ENCODE measurements at regions of chr7 and their contacts with region 1.

Region 1: GRCh38 chr7:115748131-115748738 is 282.3 kb downstream of the TFEC start:
- DNase-seq: peak; percentile 20
- H3K4me3 Mint-ChIP-seq: no peak overlapping the region
- H3K27ac Mint-ChIP-seq: no peak overlapping the region
- H3K4me1 Mint-ChIP-seq: no peaks in the 10 kb centered on the region
- H3K27me3 Mint-ChIP-seq: no peaks in the 10 kb centered on the region
- CTCF ChIP-seq: peak; percentile 41

Region 2: GRCh38 chr7:115230882-115231571 is 517.2 kb before region 1 on chr7:
- CTCF ChIA-PET with region 1: no interaction called
- intact Hi-C with region 1: loop called (anchors 5 kb)
- DNase-seq: peak; percentile 32
- H3K4me3 Mint-ChIP-seq: no peak overlapping the region
- H3K27ac Mint-ChIP-seq: peak overlapping the region; percentile 97
- H3K4me1 Mint-ChIP-seq: peaks cover 9% of the 10 kb centered on the region
- H3K27me3 Mint-ChIP-seq: no peaks in the 10 kb centered on the region
- CTCF ChIP-seq: no peak

Region 3: DNA sequence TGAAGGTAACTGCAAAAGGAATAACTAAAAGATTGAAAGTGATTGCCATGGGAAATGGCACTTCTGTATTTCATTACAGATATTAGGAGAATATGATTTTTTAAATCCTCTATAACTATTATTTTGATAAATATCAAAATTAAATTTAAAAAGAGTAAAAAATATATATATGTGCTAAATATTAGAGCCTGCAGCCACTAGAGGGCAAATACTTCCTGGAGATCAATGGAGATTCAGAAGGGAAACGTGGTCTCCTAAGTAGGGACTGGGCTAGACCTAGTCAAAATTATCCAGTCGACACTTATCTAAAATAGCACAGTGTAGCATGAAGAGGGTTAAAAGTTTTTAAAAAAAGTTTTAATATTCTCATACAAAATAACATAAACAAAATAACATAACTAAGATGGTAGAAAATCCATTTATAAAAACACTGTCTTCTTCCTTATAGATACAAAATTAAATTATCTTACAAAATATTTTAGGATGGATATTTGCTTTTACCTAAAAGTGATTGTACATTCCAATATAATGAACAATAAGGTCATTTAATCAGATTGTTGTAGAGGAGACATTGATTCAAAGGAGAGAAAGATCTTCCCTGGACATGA is 392.0 kb before region 1 on chr7:
- CTCF ChIA-PET with region 1: no interaction called
- intact Hi-C with region 1: loop called (anchors 10 kb)
- DNase-seq: peak; percentile 14
- H3K4me3 Mint-ChIP-seq: no peak overlapping the region
- H3K27ac Mint-ChIP-seq: no peak overlapping the region
- H3K4me1 Mint-ChIP-seq: peaks cover 9% of the 10 kb centered on the region
- H3K27me3 Mint-ChIP-seq: no peaks in the 10 kb centered on the region
- CTCF ChIP-seq: peak; percentile 40

Region 4: GRCh38 chr7:115387137-115387536 is 361.1 kb before region 1 on chr7:
- CTCF ChIA-PET with region 1: no interaction called
- intact Hi-C with region 1: loop called (anchors 5 kb)
- DNase-seq: no peak
- H3K4me3 Mint-ChIP-seq: no peak overlapping the region
- H3K27ac Mint-ChIP-seq: no peak overlapping the region
- H3K4me1 Mint-ChIP-seq: no peaks in the 10 kb centered on the region
- H3K27me3 Mint-ChIP-seq: no peaks in the 10 kb centered on the region
- CTCF ChIP-seq: no peak

Region 5: GRCh38 chr7:115511330-115511729 is 236.9 kb before region 1 on chr7:
- CTCF ChIA-PET with region 1: no interaction called
- intact Hi-C with region 1: loop called (anchors 1 kb)
- DNase-seq: peak; percentile 8
- H3K4me3 Mint-ChIP-seq: no peak overlapping the region
- H3K27ac Mint-ChIP-seq: no peak overlapping the region
- H3K4me1 Mint-ChIP-seq: no peaks in the 10 kb centered on the region
- H3K27me3 Mint-ChIP-seq: no peaks in the 10 kb centered on the region
- CTCF ChIP-seq: no peak